HepG2 (cell line): ENCODE measurements at regions of chr18 and their contacts with region 1.

Region 1: DNA sequence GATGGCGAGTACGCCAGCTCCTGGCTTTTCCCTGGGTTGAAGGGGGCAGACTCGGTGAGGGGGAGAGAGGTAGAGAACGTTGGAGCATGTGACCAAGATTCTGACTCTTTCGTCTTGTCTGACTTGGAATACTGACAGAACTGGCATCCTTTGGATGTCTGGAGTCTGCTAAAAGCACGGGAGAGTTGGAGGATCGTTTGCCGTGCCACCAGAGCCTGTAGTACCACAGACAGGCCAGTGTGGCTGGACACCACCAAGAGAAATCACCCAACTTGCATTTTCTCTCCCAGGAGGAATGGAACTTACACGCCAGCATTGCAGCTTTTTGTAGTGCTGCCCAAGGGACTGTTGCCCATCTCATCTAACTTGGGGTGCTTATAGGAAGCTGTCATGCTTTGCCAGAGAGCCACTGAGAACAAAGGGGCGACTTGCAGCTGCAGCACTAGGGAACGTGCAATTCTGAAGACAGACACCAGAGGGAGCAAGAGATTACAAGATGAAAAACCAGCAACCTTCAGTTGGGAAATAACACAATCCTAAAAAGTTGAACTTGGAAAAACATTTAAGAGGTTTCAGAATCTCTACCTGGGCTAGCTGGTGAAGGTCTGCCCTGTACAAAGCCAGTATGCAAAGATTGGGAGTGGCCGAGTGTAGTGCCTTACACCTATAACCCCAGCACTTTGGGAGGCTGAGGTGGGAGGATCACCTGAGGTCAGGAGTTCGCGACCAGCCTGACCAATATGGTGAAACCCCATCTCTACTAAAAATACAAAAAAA is 24.1 kb downstream of the PSMG2 start:
- DNase-seq: peak; percentile 65
- ATAC-seq: peak; percentile 36
- H3K4me3 ChIP-seq: no peak overlapping the region
- H3K27ac ChIP-seq: no peak overlapping the region
- H3K4me1 ChIP-seq: peaks cover 32% of the 10 kb centered on the region
- H3K27me3 ChIP-seq: no peaks in the 10 kb centered on the region; a peak in 1 of 5 replicates
- CTCF ChIP-seq: peak; percentile 88
- EP300 ChIP-seq: no peak
- POLR2A ChIP-seq: no peak
- RAD21 ChIP-seq: peak; percentile 88

Region 2: DNA sequence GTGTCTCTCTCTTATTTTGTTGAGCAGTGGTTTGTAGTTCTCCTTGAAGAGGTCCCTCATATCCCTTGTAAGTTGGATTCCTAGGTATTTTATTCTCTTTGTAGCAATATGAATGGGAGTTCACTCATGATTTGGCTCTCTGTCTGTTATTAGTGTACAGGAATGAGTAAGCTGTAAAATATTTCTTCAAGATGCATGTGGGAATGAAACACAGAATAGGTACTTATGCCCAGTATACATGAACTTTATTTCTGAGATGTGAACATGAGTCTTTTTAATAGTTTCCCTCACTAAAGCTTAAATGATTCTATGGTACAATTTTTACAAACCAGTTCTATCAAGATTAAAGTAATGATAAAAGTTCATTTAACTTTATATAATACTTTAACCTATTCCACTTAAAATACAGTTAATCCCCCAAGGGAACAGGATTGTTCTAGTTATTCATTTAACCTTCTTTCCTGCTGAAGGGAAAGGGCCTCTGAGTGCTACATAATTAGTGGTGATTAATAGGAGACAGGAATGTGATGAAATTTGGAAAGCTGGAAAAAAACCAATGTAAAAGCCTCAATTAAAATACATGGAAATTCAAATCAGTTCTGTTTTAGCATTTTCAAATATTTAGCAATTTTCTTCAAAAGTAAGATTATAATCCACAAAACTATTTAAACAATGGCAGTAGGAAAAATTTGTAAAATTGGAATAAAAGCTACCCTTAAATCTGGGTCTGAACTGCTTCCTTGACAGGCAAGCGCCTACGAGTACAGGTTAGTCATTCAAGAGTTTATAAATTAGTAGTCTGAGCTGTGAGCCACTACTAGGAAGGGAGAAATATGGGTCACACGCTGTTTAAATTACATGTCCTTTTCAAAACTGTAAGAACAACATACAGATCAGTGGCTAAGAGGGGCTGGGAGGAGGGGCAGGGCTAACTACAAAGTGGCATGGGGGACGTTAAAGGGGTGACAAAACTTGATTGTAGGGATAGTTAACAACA is 98.0 kb before region 1 on chr18:
- CTCF ChIA-PET with region 1: no interaction called
- POLR2A ChIA-PET with region 1: no interaction called
- in situ Hi-C with region 1: no loop called
- intact Hi-C with region 1: no loop called
- DNase-seq: no peak
- ATAC-seq: no peak
- H3K4me3 ChIP-seq: no peak overlapping the region
- H3K27ac ChIP-seq: no peak overlapping the region
- H3K4me1 ChIP-seq: no peaks in the 10 kb centered on the region
- H3K27me3 ChIP-seq: no peaks in the 10 kb centered on the region
- CTCF ChIP-seq: no peak
- EP300 ChIP-seq: no peak
- POLR2A ChIP-seq: no peak
- RAD21 ChIP-seq: no peak

Region 3: DNA sequence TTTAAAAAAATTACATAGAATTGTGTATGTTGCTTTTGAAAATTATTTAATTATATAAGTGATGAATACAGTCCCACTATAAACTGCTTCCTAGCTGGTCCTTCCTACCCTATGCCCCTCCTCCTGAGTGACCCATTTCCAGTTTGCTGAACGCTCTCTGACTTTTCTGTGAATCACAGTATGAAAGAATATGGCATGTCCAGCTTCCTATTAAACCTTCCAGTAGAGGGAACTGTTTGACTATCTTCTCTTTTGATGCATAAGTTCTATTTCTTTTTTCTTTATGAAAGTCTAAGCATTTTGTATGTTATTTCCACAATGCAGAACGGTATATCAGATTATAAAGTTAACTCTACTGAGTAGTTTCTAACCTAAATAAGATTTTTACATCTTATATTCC is 17.1 kb after region 1 on chr18:
- CTCF ChIA-PET with region 1: no interaction called
- POLR2A ChIA-PET with region 1: interaction called, 39 read pairs
- in situ Hi-C with region 1: no loop called
- intact Hi-C with region 1: loop called (anchors 1 kb)
- DNase-seq: peak; percentile 64
- ATAC-seq: peak; percentile 55
- H3K4me3 ChIP-seq: no peak overlapping the region
- H3K27ac ChIP-seq: no peak overlapping the region
- H3K4me1 ChIP-seq: peaks cover 37% of the 10 kb centered on the region
- H3K27me3 ChIP-seq: no peaks in the 10 kb centered on the region
- CTCF ChIP-seq: peak; percentile 62
- EP300 ChIP-seq: no peak
- POLR2A ChIP-seq: no peak
- RAD21 ChIP-seq: peak; percentile 25; the same call in 1 of the 2 replicates

Region 4: GRCh38 chr18:12768625-12769024 is 41.7 kb after region 1 on chr18:
- CTCF ChIA-PET with region 1: interaction called, 25 read pairs
- POLR2A ChIA-PET with region 1: interaction called, 34 read pairs
- in situ Hi-C with region 1: loop called (anchors 5 kb)
- intact Hi-C with region 1: loop called (anchors 1 kb)
- DNase-seq: no peak
- ATAC-seq: no peak
- H3K4me3 ChIP-seq: no peak overlapping the region; a peak in 1 of 6 replicates
- H3K27ac ChIP-seq: no peak overlapping the region
- H3K4me1 ChIP-seq: peaks cover 39% of the 10 kb centered on the region
- H3K27me3 ChIP-seq: no peaks in the 10 kb centered on the region
- CTCF ChIP-seq: no peak
- EP300 ChIP-seq: no peak
- POLR2A ChIP-seq: no peak
- RAD21 ChIP-seq: no peak

Region 5: GRCh38 chr18:12890506-12890905 is 163.5 kb after region 1 on chr18:
- CTCF ChIA-PET with region 1: interaction called, 18 read pairs
- POLR2A ChIA-PET with region 1: interaction called, 11 read pairs
- in situ Hi-C with region 1: no loop called
- intact Hi-C with region 1: loop called (anchors 2 kb)
- DNase-seq: peak; percentile 45
- ATAC-seq: peak; percentile 90
- H3K4me3 ChIP-seq: no peak overlapping the region
- H3K27ac ChIP-seq: no peak overlapping the region
- H3K4me1 ChIP-seq: peaks cover 16% of the 10 kb centered on the region
- H3K27me3 ChIP-seq: 0 out of 5 replicates have a peak, but pooled peaks cover 0 to 3% of the 10 kb centered on the region in 2 experiments
- CTCF ChIP-seq: peak; percentile 43
- EP300 ChIP-seq: no peak
- POLR2A ChIP-seq: no peak
- RAD21 ChIP-seq: 0 out of 2 replicates have a peak, but pooled peaks have one; percentile 27